ENCODE measurements at regions of chr14 and their contacts with region 1.

Region 1: DNA sequence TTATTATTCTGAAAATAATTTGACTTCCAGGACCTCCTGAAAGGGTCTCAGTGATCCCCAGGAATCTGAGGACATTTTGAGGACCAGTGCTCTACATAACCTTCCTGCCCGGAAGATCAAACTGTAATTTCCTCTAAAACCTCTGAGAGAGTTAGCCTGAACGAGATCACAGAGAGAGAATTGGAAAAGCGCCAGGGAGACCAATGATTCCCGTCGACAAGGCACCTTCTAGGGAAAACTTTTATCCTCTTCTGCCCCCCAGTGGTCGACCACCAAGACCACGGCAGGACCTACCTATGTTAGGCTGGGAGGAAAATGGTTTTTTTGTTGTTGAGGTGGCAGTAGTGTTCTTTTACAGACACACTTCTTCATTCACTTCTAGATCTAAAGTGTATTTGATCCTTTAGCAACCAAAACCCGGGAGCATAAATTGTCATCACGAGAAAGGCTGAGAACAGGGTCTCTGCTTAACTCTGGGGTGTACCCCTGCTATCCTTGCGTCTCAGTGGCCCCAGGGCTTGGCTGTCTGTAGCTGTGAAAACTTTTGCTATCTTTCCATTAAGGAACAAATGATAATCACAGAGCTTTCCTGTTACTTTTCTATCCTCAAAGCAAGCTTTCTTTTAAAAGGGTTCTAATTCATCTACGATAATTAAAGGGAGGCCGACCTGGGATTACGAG is 62.9 kb upstream of the NID2 start:
- DNase-seq: peak; percentile 91
- H3K4me3 Mint-ChIP-seq: no peak overlapping the region
- H3K27ac Mint-ChIP-seq: no peak overlapping the region
- H3K4me1 Mint-ChIP-seq: no peaks in the 10 kb centered on the region
- H3K27me3 Mint-ChIP-seq: no peaks in the 10 kb centered on the region
- CTCF ChIP-seq: peak; percentile 59

Region 2: DNA sequence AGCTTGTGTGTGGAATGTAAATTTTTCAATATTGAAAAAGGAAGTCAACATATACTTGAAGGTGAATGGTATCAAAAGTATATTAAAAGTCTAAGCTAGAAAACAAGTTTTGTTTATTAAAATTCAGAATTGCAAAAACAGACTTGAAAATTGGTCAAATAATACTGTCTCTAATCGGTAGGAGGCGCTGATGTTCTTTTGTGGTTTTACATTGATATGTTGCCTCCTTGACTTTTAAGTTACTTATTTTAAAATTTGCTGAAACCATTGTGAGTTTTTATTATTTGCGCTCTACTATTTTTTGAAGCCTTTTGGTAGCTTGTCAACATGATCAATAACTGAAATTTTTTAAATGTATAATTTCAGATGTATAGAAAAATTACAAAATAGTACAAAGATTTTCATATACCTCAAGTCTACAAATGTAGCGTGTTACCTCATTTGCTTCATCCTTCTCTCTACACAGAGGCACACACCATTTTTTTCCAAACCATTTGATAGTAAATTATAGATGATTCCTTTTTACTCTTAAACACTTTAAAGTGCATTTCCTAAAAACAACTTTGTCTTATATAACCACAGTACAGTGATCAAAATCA is 135.5 kb before region 1 on chr14:
- CTCF ChIA-PET with region 1: interaction called, 12 read pairs
- POLR2A ChIA-PET with region 1: interaction called, 3 read pairs
- intact Hi-C with region 1: loop called (anchors 1 kb)
- DNase-seq: peak; percentile 51
- H3K4me3 Mint-ChIP-seq: no peak overlapping the region
- H3K27ac Mint-ChIP-seq: peak overlapping the region; percentile 85
- H3K4me1 Mint-ChIP-seq: peaks cover 26% of the 10 kb centered on the region
- H3K27me3 Mint-ChIP-seq: no peaks in the 10 kb centered on the region
- CTCF ChIP-seq: peak; percentile 47

Region 3: DNA sequence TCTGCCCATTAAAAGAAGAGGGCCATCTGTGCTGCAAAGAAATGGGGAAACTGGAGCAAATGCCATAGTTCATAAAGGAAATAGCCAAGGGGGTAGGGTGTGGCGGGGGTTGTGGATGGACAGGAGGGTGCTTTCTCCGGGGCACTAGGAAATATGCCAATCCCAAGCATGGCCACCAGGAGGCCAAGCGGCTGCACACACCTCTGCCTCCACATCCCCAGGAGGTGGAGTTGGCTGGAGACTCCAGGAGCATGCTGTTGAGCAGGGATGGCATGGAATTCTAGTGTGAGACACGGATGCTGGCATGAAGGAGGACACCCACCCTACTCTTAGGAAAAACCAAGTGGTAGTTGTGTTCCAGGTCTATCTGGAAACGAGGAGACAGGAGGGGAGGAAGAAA is 88.1 kb before region 1 on chr14:
- CTCF ChIA-PET with region 1: interaction called, 7 read pairs
- POLR2A ChIA-PET with region 1: no interaction called
- intact Hi-C with region 1: loop called (anchors 1 kb)
- DNase-seq: peak; percentile 59
- H3K4me3 Mint-ChIP-seq: no peak overlapping the region
- H3K27ac Mint-ChIP-seq: no peak overlapping the region
- H3K4me1 Mint-ChIP-seq: peaks cover 13% of the 10 kb centered on the region
- H3K27me3 Mint-ChIP-seq: no peaks in the 10 kb centered on the region
- CTCF ChIP-seq: peak; percentile 35

Region 4: DNA sequence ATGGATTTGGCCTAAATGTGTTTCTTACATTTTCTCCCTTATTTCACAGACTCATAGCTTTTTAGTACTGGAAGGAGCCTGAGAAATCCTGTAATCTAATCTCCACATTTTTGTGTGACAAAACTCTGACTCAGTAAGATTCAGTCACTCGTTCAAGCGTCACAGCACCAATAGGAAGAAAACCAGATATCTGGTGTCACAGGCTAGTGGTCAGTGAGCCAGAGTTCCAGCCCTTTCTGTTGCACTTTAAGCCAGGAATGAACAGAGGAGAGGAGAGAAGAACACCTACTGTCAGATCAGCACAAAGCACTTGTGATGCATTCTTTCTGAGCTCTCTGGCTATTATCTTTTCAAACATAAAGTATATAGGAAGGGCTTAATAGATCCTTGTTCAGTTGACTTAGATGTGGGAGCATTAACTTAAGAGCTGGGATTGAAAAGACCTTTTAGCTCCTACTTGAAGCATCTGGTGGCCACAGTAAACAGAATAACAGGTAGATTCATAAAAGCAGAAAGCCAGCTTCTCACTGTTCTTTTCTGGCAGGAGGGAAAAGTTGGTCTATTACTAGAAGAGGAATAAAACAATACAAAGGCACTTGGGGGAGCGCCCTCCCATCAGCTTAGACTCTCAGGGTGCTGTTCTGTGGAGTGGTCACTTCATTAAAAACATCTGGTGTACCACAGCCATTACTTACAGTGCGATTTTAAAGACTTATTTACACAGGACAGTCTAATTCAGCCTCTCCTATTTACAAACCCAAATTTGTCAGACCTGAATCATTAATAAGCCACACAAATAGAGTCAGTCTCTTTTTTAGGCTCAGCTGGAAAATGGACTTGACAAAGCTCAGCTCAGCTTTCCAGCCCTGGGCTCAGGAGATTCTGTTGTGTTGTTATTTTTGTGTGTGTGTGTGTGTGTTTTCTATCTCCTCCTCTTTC is 50.7 kb before region 1 on chr14:
- CTCF ChIA-PET with region 1: interaction called, 15 read pairs
- POLR2A ChIA-PET with region 1: no interaction called
- intact Hi-C with region 1: no loop called
- DNase-seq: peak; percentile 55
- H3K4me3 Mint-ChIP-seq: no peak overlapping the region
- H3K27ac Mint-ChIP-seq: peak overlapping the region; percentile 82
- H3K4me1 Mint-ChIP-seq: peaks cover 40% of the 10 kb centered on the region
- H3K27me3 Mint-ChIP-seq: no peaks in the 10 kb centered on the region
- CTCF ChIP-seq: no peak